Adrenal gland (tissue), 19 donors: ENCODE measurements at regions of chr7 and their contacts with region 1.

Region 1: GRCh38 chr7:48875045-48875916 is 49.1 kb upstream of the CDC14C start:
- DNase-seq: peak; percentile 19 to 76 (median 47)
- H3K4me3 ChIP-seq: no peak overlapping the region
- H3K27ac ChIP-seq: no peak overlapping the region
- H3K4me1 ChIP-seq: no peaks in the 10 kb centered on the region
- H3K27me3 ChIP-seq: no peaks in the 10 kb centered on the region
- CTCF ChIP-seq: peak in 5 of 6 experiments; percentile 22 to 57 (median 51)
- POLR2A ChIP-seq: no peak

Region 2: GRCh38 chr7:47924270-47924669 is 951.0 kb before region 1 on chr7:
- intact Hi-C with region 1: no loop called
- DNase-seq: no peak
- H3K4me3 ChIP-seq: no peak overlapping the region
- H3K27ac ChIP-seq: no peak overlapping the region
- H3K4me1 ChIP-seq: no peaks in the 10 kb centered on the region
- H3K27me3 ChIP-seq: no peaks in the 10 kb centered on the region
- CTCF ChIP-seq: no peak
- POLR2A ChIP-seq: no peak

Region 3: DNA sequence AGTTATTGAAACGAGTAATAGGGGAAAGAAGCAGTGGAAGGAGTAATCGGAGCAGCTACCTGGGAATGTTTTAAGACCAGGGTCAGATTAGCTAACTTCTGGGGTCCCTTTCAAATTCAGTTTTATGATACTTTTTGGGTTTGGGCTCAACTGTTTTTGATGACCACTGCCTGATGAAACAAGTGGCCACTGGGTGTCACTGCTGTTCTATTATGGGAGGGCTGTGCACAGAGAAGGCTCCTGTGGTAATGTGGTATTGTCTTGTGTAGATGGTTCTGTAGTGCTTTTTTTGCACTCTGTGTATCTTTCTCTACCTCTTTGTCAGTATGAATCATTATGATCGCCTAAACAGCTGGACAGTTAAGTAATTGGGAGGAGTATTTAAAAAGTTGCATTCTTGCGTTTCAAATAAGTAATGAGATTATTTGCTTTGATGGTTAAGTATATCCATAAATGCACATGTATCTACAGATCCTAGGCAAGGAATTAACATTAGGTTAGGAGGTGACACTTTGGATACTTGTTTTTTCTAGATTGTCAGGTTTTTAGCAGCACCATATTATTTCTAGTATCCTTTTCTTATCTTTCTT is 575.6 kb before region 1 on chr7:
- intact Hi-C with region 1: loop called in 1 of 2 experiments (anchors 5 kb)
- DNase-seq: peak; percentile 46 to 84 (median 68)
- H3K4me3 ChIP-seq: no peak overlapping the region
- H3K27ac ChIP-seq: no peak overlapping the region
- H3K4me1 ChIP-seq: no peaks in the 10 kb centered on the region
- H3K27me3 ChIP-seq: no peaks in the 10 kb centered on the region
- CTCF ChIP-seq: peak; percentile 58 to 81 (median 77)
- POLR2A ChIP-seq: no peak